ENCODE measurements at regions of chr7 and their contacts with region 1.

Region 1: DNA sequence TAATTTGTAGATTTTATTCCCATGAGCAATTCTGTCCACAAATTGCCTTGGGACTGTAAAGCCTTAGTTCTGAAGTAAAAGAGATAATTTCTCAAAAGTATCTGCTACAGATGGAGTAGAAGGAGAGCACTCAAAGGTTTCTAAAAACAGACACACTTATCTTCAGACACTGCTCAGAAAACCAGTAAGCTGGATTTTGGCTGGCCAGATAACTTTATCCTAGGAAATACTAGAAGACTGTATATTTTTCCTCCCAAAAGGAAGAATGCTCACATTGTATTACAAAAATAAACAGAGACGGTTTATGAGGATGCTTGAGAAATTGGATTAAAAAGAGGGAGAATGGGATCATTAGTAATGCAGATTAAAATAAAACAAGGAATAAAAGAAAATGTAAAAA is 178.0 kb upstream of the IGFBP3 start:
- DNase-seq: no peak
- ATAC-seq: no peak
- H3K4me3 ChIP-seq: no peak overlapping the region
- H3K27ac ChIP-seq: no peak overlapping the region
- H3K4me1 ChIP-seq: no peaks in the 10 kb centered on the region
- H3K27me3 ChIP-seq: no peaks in the 10 kb centered on the region
- CTCF ChIP-seq: no peak

Region 2: DNA sequence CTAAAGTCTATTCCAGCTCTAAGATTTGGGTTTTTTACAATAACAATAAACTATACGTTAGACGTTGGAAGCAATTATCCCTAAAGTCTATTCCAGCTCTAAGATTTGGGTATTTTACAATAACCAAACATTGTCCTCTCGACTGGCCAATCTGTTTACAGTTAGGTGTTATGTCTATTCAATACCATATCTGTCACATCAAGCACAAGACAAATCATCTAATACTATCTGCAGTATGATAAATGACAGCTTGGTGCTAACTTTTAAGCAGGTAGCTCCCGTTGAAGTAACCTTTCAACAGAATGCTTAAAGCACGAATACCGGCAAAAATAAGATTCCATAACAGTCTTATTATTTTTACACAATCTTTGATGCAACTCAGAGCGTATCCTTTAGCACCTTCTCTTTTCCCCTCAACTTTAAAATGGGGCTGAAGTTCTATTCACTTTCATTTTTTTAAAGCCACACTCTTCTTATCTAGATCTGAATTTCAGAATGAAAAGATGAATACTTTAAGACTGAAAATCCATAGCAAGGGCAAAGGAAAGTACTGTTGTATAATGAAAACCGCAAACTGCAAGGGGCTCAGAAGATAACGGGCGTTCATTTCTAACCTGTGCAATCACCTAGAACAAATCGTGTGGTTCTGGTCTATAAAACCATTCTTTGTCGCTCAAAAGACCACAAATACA is 1252.1 kb before region 1 on chr7:
- CTCF ChIA-PET with region 1: no interaction called
- POLR2A ChIA-PET with region 1: no interaction called
- in situ Hi-C with region 1: no loop called
- intact Hi-C with region 1: no loop called
- DNase-seq: no peak
- ATAC-seq: no peak
- H3K4me3 ChIP-seq: peak overlapping the region; percentile 75 to 96
- H3K27ac ChIP-seq: peak overlapping the region; percentile 96
- H3K4me1 ChIP-seq: peaks cover 23% of the 10 kb centered on the region
- H3K27me3 ChIP-seq: no peaks in the 10 kb centered on the region
- CTCF ChIP-seq: no peak

Region 3: DNA sequence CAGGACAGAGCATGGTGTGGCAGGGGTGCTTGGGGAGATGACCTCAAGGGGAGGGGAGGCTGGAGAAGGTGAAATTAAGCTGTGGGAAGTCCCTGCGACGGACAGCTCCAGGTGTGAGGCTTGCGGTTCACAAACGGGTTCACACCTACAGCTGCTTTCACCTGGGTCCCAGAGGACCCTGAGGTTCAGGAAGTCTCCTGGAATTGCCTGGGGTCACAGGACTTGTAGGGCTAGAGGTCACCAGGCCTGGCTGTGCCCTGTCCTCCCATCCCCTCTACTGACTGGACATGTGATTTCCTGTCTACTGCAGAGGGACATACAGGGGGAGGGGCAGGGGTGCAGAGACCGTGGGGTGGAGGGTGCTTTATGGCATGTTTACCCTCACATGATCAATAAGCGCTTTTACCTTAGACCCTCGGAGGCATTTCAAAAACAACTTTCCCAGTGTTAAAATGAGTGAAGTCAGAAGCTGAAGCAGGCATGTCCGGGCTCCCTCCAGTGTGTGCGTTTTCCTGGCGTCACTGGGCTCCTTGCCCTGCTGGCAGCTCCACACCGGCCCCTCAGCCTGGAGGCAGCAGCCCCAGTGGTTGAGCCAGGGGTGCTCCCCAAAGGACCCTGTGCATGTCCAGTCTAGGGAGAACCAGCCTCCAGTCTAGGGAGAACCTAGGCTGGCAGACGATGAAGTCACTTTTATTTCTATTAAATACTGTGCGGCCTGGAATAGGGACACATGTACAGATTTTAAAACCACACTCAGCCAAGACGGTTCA is 111.4 kb before region 1 on chr7:
- CTCF ChIA-PET with region 1: interaction called, 17 read pairs
- POLR2A ChIA-PET with region 1: no interaction called
- in situ Hi-C with region 1: no loop called
- intact Hi-C with region 1: no loop called
- DNase-seq: no peak
- ATAC-seq: no peak
- H3K4me3 ChIP-seq: no peak overlapping the region
- H3K27ac ChIP-seq: no peak overlapping the region
- H3K4me1 ChIP-seq: no peaks in the 10 kb centered on the region
- H3K27me3 ChIP-seq: no peaks in the 10 kb centered on the region
- CTCF ChIP-seq: no peak

Region 4: GRCh38 chr7:46153951-46154787 is 55.1 kb after region 1 on chr7:
- CTCF ChIA-PET with region 1: no interaction called
- POLR2A ChIA-PET with region 1: no interaction called
- in situ Hi-C with region 1: no loop called
- intact Hi-C with region 1: loop called (anchors 10 kb)
- DNase-seq: no peak
- ATAC-seq: peak; percentile 84
- H3K4me3 ChIP-seq: no peak overlapping the region
- H3K27ac ChIP-seq: peak overlapping the region; percentile 12; the same call in 1 of the 2 replicates
- H3K4me1 ChIP-seq: peaks cover 2% of the 10 kb centered on the region; the same call in 1 of the 2 replicates
- H3K27me3 ChIP-seq: no peaks in the 10 kb centered on the region
- CTCF ChIP-seq: no peak

Measured in Panc1 (cell line).